CD14-positive monocyte (primary cell): ENCODE measurements at regions of chr6 and their contacts with region 1.

Region 1: GRCh38 chr6:71349395-71349794 is 60.8 kb downstream of the OGFRL1 start:
- DNase-seq: peak in 2 of 3 donors; percentile 26 to 60
- H3K4me3 ChIP-seq: no peak overlapping the region
- H3K4me3 Mint-ChIP-seq: no peak overlapping the region
- H3K27ac ChIP-seq: no peak overlapping the region
- H3K27ac Mint-ChIP-seq: no peak overlapping the region
- H3K4me1 ChIP-seq: peaks cover 22 to 33% of the 10 kb centered on the region in 2 donors
- H3K4me1 Mint-ChIP-seq: peaks cover 34% of the 10 kb centered on the region
- H3K27me3 ChIP-seq: no peaks in the 10 kb centered on the region
- H3K27me3 Mint-ChIP-seq: peaks cover 0 to 1% (median 0%) of the 10 kb centered on the region in 3 donors
- CTCF ChIP-seq: peak; percentile 93

Region 2: GRCh38 chr6:71190809-71191208 is 158.6 kb before region 1 on chr6:
- intact Hi-C with region 1: loop called (anchors 2 to 5 kb)
- DNase-seq: peak; percentile 9 to 59 (median 21)
- H3K4me3 ChIP-seq: no peak overlapping the region
- H3K4me3 Mint-ChIP-seq: no peak overlapping the region
- H3K27ac ChIP-seq: no peak overlapping the region
- H3K27ac Mint-ChIP-seq: peak overlapping the region in 1 of 7 donors; percentile 19
- H3K4me1 ChIP-seq: peaks cover 0 to 6% of the 10 kb centered on the region in 2 donors
- H3K4me1 Mint-ChIP-seq: peaks cover 14% of the 10 kb centered on the region
- H3K27me3 ChIP-seq: no peaks in the 10 kb centered on the region
- H3K27me3 Mint-ChIP-seq: peaks cover 0 to 2% (median 2%) of the 10 kb centered on the region in 3 donors
- CTCF ChIP-seq: peak; percentile 75

Region 3: DNA sequence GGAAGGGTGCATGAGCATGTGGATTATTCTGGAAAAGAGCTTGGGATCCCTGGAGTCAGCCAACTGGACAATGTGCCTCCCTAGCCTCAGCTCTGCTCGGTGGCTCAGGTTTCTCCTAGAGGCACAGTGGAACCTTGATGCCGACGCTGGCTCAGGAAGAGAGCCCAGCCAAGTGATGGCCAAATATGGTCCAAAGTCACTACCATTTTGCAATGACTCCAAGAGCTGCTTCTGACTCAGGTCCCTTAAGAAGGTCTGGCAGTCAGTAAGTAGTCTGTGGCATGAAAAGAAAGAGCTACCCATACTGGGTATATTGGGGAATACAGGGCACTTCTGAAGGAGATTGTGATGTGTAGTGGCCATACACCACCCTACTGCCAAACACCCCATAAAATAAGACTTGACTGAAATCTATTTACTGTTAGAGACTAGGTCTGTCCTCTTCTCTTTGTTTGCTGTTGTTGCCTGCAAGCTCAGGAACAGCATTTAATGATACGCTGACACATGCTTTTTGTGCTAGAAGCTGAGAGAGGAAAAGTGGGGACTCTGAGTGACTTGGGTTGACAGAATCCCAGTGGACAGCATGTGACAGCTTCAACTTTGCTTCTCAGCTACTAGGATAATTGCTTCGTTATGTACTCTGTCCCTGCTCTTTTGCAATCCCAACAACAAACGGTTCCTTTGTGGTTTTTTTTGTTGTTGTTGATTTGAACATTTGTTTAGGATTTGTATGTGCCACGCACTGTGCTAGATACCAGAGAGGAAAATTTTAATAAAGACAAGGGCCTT is 91.1 kb before region 1 on chr6:
- intact Hi-C with region 1: no loop called
- DNase-seq: no peak
- H3K4me3 ChIP-seq: no peak overlapping the region
- H3K4me3 Mint-ChIP-seq: no peak overlapping the region
- H3K27ac ChIP-seq: no peak overlapping the region
- H3K27ac Mint-ChIP-seq: peak overlapping the region in 1 of 7 donors; percentile 30
- H3K4me1 ChIP-seq: peaks cover 37 to 39% of the 10 kb centered on the region in 2 donors
- H3K4me1 Mint-ChIP-seq: peaks cover 44% of the 10 kb centered on the region
- H3K27me3 ChIP-seq: no peaks in the 10 kb centered on the region
- H3K27me3 Mint-ChIP-seq: no peaks in the 10 kb centered on the region
- CTCF ChIP-seq: no peak